Cardiac septum (tissue), 1 donor: ENCODE measurements at regions of chr5 and their contacts with region 1.

Region 1: GRCh38 chr5:18314192-18314778 is 680.0 kb downstream of the TAF11L14 start:
- DNase-seq: no peak

Region 2: GRCh38 chr5:17216176-17216973 is 1097.9 kb before region 1 on chr5:
- intact Hi-C with region 1: loop called (anchors 5 kb)
- DNase-seq: peak; percentile 87